MCF 10A (cell line): ENCODE measurements at regions of chr1 and their contacts with region 1.

Region 1: GRCh38 chr1:234499119-234499942 is 20.4 kb upstream of the TARBP1 start:
- DNase-seq: peak; percentile 97
- H3K4me3 Mint-ChIP-seq: peak overlapping the region; percentile 28
- H3K27ac Mint-ChIP-seq: peak overlapping the region; percentile 71
- H3K4me1 Mint-ChIP-seq: peaks cover 53% of the 10 kb centered on the region
- H3K27me3 Mint-ChIP-seq: no peaks in the 10 kb centered on the region
- CTCF ChIP-seq: peak; percentile 100

Region 2: DNA sequence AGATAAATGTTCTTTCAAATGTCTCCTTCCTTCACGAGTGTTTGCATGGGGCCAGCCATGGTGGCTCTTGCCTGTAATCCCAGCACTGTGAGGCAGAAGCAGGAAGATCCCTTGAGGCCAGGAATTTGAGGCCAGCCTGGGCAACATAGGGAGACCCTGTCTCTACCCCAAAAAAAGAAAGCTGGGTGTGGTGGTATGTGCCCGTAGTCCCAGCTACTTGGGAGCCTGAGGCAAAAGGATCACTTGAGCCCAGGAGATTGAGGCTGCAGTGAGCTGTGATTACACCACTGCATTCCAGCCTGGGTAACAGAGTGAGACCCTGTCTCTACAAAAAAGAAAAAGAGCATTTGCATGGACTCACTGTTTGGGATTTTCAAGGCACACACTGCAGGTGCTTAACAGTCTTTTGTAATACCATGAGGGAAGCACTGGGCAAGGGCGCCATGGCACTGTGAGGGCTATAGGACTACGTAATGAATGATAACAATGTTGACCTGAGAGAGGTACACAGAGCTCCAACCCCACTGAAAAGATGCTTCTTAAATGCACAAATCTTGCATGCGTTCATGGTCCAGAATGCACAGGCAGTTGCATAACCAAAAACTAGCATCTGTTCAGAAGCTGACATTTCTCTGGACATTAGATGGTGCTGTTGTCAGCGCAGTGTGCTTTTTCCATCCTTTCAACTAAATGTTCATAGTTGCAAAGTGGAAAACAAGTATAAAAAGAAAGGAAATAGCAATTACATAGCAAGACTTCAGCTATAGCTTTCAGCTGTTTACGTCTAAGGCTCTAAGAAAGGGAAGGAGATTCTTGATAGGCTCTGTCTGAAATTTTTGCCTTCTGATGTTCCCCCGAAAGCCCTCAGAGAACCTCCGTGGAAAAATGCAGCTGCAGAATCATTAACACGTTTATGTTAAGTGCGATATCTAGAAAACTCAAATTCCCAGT is 12.6 kb before region 1 on chr1:
- CTCF ChIA-PET with region 1: interaction called, 37 read pairs
- POLR2A ChIA-PET with region 1: interaction called, 10 read pairs
- intact Hi-C with region 1: no loop called
- DNase-seq: peak; percentile 87
- H3K4me3 Mint-ChIP-seq: no peak overlapping the region
- H3K27ac Mint-ChIP-seq: no peak overlapping the region
- H3K4me1 Mint-ChIP-seq: peaks cover 15% of the 10 kb centered on the region
- H3K27me3 Mint-ChIP-seq: peaks cover 20% of the 10 kb centered on the region
- CTCF ChIP-seq: peak; percentile 96

Region 3: GRCh38 chr1:234544087-234544579 is 44.8 kb after region 1 on chr1:
- CTCF ChIA-PET with region 1: interaction called, 26 read pairs
- POLR2A ChIA-PET with region 1: interaction called, 443 read pairs
- intact Hi-C with region 1: no loop called
- DNase-seq: peak; percentile 96
- H3K4me3 Mint-ChIP-seq: no peak overlapping the region
- H3K27ac Mint-ChIP-seq: peak overlapping the region; percentile 80
- H3K4me1 Mint-ChIP-seq: peaks cover 36% of the 10 kb centered on the region
- H3K27me3 Mint-ChIP-seq: no peaks in the 10 kb centered on the region
- CTCF ChIP-seq: no peak

Region 4: DNA sequence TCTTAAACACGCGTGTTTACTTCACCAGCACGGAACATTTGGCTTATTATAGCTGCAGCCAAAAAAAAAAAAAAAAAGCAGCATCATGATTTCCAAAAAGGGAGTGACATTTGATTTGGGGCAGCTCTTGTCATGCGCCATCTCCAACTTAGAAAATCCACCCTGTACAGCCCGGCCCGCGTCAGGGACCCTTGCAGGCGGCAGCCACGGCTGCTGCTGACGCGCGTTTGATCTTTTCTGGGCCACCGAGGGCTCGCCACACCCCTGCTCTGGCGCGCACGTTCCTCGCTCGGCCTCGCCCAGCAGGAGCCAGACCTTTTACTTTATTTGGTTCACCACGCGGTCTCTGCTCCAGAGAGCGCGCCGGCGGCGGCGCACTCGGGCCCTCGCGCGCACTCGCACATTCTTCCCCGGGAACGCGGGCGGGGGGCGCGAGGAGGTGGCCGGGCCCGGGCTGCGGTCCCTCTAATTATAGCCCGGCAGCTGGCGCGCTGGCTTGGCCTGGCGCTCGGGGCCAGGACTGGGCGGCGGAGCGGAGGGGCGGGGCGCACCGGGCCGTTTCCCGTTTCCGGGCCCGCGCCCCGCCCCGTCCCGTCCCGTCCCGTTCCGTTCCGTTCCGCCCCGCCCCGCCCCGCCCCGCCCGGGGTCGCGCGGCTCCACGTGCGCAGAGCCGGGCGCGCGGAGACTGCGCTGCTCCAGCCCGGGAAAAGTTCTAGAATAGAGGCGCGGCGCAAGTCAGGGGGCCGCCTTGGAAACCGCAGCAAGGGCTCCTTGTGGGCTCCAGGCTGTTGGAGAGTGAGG is 100.5 kb after region 1 on chr1:
- CTCF ChIA-PET with region 1: interaction called, 65 read pairs
- POLR2A ChIA-PET with region 1: interaction called, 904 read pairs
- intact Hi-C with region 1: no loop called
- DNase-seq: peak; percentile 93
- H3K4me3 Mint-ChIP-seq: peak overlapping the region; percentile 80
- H3K27ac Mint-ChIP-seq: peak overlapping the region; percentile 90
- H3K4me1 Mint-ChIP-seq: peaks cover 41% of the 10 kb centered on the region
- H3K27me3 Mint-ChIP-seq: no peaks in the 10 kb centered on the region
- CTCF ChIP-seq: no peak

Region 5: DNA sequence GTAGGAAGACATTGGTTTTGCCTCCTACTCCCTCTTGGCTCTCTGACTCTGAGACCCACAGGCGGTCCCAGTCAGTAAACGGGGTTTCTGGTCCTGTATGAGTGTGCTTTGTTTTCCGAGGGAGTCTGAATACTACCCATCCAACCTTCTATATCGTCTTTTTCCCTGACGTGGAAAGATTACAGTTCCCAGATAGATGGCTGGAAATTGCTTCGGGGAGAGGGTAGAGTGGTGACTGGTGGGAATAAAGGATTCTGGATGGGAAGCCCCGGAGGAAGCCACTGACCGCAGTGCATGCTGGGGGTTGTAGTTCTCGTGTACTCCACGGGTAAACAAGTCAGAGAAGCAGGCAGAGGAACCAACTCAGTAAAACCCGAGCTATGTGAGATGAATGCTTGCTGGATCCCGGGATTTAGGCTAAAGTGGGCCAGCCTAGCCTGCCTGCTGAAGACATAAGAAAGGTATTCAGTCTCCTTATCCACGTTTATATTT is 176.8 kb after region 1 on chr1:
- CTCF ChIA-PET with region 1: no interaction called
- POLR2A ChIA-PET with region 1: no interaction called
- intact Hi-C with region 1: no loop called
- DNase-seq: peak; percentile 78
- H3K4me3 Mint-ChIP-seq: peak overlapping the region; percentile 52
- H3K27ac Mint-ChIP-seq: no peak overlapping the region
- H3K4me1 Mint-ChIP-seq: no peaks in the 10 kb centered on the region
- H3K27me3 Mint-ChIP-seq: no peaks in the 10 kb centered on the region
- CTCF ChIP-seq: no peak

Region 6: DNA sequence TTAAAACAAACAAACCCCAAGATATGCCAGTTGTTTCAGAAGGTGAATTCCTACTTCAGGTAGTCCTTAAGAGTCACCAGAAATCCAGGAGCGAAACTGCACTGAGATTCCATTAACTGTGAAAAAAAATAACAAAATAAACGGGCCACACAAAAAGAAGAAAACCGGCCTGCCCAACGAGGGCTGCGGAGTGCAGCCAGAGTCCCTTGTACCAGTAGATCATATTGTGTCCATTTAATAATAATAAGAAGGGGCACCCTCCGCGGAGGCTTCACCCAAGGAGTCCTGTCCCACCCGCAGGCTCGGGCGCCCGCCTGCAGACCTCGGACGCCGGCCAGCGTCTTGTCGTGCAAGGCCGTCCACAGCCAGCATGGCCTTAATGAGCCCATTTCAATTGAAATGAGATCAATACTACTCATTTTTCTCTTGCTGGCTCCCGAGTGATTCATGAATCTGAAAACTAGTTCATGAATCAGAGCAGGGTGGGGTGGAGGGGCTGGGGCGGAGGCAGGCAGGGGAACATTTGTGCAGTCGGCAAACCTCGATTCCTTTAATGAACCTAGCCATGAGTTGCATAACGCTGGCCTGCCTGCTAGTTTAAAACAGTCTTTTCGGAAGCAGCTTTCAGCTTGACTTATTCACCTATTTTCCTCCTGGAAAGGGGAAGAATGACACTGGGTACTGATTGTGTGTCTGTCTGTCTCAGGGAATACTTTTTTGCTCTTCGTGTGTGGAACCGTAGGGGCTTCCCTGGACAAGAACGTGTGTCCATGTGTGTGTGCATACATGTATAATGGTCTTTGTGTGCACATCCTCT is 223.8 kb after region 1 on chr1:
- CTCF ChIA-PET with region 1: interaction called, 5 read pairs
- POLR2A ChIA-PET with region 1: interaction called, 45 read pairs
- intact Hi-C with region 1: loop called (anchors 1 kb)
- DNase-seq: peak; percentile 99
- H3K4me3 Mint-ChIP-seq: peak overlapping the region; percentile 61
- H3K27ac Mint-ChIP-seq: peak overlapping the region; percentile 96
- H3K4me1 Mint-ChIP-seq: peaks cover 77% of the 10 kb centered on the region
- H3K27me3 Mint-ChIP-seq: no peaks in the 10 kb centered on the region
- CTCF ChIP-seq: no peak

Region 7: DNA sequence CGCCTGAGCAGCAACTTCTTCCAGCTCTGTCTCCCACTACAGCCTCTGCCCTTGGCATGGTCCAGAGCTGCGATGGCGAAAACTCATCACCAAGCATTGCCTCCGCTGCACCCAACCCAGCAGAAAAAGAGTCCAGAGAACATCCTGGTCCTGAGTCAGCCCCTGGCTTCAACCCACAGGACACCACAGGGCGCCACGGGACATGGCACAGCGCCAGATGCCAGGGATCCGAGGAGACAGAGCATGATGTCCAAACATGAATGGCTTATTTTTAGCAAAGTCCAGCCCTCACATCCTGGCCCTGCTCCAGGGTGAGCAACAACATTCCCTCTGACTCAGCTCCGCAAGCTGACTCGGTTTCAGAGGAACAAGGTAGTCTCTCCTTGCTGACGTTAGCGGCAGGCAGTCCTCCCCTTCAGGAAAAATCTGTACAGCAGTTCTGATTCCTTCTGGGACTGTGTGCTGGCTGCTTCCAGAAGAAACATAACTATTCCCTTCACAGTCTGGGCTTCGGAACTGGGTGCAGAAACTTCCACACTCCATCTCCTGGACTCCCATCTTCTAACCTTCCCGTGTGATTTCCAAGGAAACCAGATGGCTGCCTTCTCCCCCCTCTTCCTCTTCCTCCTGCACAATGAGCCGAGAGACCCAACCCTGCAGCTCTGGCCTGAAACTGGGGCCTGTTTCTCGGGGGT is 498.0 kb after region 1 on chr1:
- CTCF ChIA-PET with region 1: interaction called, 4 read pairs
- POLR2A ChIA-PET with region 1: interaction called, 13 read pairs
- intact Hi-C with region 1: loop called (anchors 1 kb)
- DNase-seq: peak; percentile 100
- H3K4me3 Mint-ChIP-seq: peak overlapping the region; percentile 58
- H3K27ac Mint-ChIP-seq: peak overlapping the region; percentile 93
- H3K4me1 Mint-ChIP-seq: peaks cover 26% of the 10 kb centered on the region
- H3K27me3 Mint-ChIP-seq: no peaks in the 10 kb centered on the region
- CTCF ChIP-seq: no peak

Region 8: DNA sequence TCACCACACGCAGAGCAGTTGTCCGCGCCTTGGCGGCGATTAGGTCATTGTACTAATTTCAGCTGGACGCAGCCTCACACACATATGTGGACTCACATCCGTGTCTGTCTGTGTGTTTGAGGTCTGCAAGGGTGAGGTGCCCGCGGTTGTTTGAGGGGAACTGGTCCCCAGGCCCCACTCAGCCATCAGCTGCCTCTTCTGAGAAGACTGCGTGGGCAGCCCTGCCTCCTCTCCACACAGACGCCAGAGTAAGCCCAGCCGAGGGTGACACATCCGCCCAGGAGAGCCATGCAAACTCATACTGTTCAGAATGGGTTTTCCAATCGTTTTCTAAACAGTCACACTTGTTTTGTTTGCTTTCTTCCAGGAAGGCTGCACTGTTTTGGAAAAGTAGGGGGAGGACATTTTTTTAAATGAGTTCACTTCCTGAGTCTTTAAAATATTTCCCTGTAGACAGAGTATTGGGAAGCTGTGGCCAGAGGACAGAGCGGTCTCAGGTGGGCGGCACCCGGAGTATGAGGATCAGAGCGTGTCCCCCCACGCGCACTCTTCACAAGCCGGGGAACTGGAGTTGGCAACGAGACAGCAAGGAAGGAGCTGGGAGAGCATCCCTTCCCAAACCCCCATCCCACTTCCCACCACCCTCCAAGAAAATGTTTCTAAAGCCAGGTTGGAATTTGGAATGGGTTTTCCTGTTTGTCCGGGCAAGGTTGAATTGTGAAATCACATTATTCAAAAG is 576.0 kb after region 1 on chr1:
- CTCF ChIA-PET with region 1: interaction called, 12 read pairs
- POLR2A ChIA-PET with region 1: interaction called, 17 read pairs
- intact Hi-C with region 1: no loop called
- DNase-seq: peak; percentile 92
- H3K4me3 Mint-ChIP-seq: no peak overlapping the region
- H3K27ac Mint-ChIP-seq: peak overlapping the region; percentile 52
- H3K4me1 Mint-ChIP-seq: peaks cover 30% of the 10 kb centered on the region
- H3K27me3 Mint-ChIP-seq: no peaks in the 10 kb centered on the region
- CTCF ChIP-seq: no peak